ENCODE measurements at regions of chr10 and their contacts with region 1.

Region 1: DNA sequence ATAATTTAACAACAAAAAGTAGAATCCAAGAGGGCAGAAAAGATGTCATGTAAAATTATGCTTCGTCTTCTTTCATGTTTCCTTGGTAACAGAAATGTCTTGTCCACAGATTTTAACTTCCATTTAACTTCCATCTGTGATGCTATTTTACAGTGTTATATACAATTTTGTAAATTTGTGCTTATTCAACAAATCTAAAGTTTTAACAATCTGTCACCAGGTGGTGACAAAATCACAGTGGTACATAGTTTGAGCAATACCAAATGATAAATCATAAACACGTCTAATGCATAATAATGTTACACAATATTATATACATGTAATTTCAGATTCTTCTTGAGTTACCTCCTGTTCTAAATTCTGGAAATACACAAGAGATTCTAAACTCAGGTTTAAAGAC is 784.4 kb upstream of the CELF2 start:
- DNase-seq: no peak
- ATAC-seq: no peak
- H3K4me3 ChIP-seq: no peak overlapping the region
- H3K27ac ChIP-seq: no peak overlapping the region
- H3K4me1 ChIP-seq: no peaks in the 10 kb centered on the region
- H3K27me3 ChIP-seq: no peaks in the 10 kb centered on the region
- CTCF ChIP-seq: peak in 10 of 12 donors; percentile 7 to 56 (median 28)
- POLR2A ChIP-seq: no peak

Region 2: GRCh38 chr10:10293041-10293440 is 59.8 kb after region 1 on chr10:
- intact Hi-C with region 1: no loop called
- DNase-seq: no peak
- ATAC-seq: no peak
- H3K4me3 ChIP-seq: no peak overlapping the region
- H3K27ac ChIP-seq: peak overlapping the region in 4 of 12 donors; percentile 8 to 48 (median 24)
- H3K4me1 ChIP-seq: peaks cover 0 to 13% (median 0%) of the 10 kb centered on the region in 12 donors
- H3K27me3 ChIP-seq: no peaks in the 10 kb centered on the region
- CTCF ChIP-seq: no peak
- POLR2A ChIP-seq: no peak

Region 3: DNA sequence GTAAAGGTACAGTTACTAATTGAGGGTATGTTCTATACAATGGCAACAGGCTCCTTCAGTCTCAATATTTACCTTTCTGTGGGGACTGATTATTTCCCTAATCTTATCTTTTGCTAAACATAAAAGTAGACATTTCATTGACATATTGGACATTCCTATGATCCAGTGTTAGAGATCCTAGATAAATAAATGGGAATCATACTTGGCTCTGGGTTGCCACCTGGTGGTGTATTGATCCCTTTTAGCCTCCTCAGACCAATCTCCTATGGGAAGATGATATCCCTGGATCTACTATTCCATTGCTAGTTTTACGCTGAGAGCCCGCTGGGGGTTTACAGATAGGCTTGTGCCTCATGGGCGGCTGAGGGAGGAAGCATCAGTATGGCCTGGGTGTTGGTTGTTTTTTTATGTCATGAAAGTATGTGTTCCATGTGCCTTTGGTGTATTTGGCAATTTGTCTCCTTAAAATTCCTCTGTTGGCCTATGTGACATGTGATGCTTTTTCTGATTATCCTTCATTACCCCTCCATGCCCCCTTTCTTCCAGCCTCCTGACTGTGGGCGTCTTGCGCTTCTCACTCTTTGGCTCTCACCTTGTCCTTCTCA is 803.3 kb after region 1 on chr10:
- intact Hi-C with region 1: loop called in 1 of 10 experiments (anchors 10 kb)
- DNase-seq: peak in 1 of 5 donors; percentile 37
- ATAC-seq: peak; percentile 50 to 60 (median 59)
- H3K4me3 ChIP-seq: no peak overlapping the region
- H3K27ac ChIP-seq: peak overlapping the region in 8 of 12 donors; percentile 4 to 88 (median 65)
- H3K4me1 ChIP-seq: peaks cover 7 to 59% (median 32%) of the 10 kb centered on the region in 12 donors
- H3K27me3 ChIP-seq: no peaks in the 10 kb centered on the region
- CTCF ChIP-seq: peak; percentile 35 to 75 (median 65)
- POLR2A ChIP-seq: no peak

Measured in heart left ventricle (tissue), 16 donors.